ENCODE measurements at regions of chr20 and their contacts with region 1.

Region 1: GRCh38 chr20:47785854-47786764 is 828 bp upstream of the SULF2 start:
- DNase-seq: peak; percentile 80
- ATAC-seq: peak; percentile 74 to 88
- H3K4me3 ChIP-seq: peak overlapping the region; percentile 69
- H3K27ac ChIP-seq: peak overlapping the region; percentile 73 to 90
- H3K4me1 ChIP-seq: 0 out of 3 replicates have a peak, but pooled peaks cover 12% of the 10 kb centered on the region
- CTCF ChIP-seq: peak; percentile 82
- EP300 ChIP-seq: no peak
- POLR2A ChIP-seq: no peak
- RAD21 ChIP-seq: peak; percentile 89 to 95

Region 2: DNA sequence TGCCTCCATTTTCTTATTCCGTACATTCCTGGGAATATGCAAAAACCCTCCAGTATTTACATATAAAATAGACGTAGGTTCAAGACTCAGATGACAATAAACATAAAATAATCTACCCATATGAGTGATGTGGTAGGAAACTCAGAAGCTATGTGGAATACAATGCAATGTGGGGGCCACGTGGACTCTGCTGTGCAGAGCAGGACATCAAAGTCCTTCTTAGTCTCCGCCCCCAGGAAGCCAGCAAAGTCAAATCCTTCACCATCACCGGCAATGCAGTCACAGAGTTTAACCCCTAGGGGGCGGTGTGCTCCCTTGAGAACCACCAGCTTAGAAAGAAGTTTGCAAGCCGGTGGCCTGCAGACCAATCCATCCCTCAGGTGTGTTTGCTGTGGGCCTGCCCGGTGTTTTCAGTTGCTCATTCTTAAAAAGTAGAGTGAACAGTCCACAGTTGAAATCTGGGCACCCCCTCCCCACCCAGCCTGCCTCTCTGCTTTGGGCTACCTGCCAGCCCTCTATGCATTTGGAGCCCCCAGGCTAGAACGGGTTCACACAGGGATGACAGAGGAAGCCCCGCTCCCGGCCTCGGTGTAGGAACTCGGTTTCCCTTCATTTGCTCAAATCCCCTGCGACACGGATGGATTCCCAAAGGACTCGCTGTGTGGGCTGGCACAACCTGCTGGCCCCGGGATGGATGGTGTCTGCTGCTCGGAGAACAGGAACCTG is 60.7 kb before region 1 on chr20:
- CTCF ChIA-PET with region 1: interaction called, 28 read pairs
- POLR2A ChIA-PET with region 1: no interaction called
- DNase-seq: peak; percentile 85 to 88
- ATAC-seq: peak; percentile 81 to 92
- H3K4me3 ChIP-seq: no peak overlapping the region
- H3K27ac ChIP-seq: no peak overlapping the region
- H3K4me1 ChIP-seq: no peaks in the 10 kb centered on the region
- CTCF ChIP-seq: peak; percentile 81
- EP300 ChIP-seq: no peak
- POLR2A ChIP-seq: no peak
- RAD21 ChIP-seq: peak; percentile 81 to 90

Region 3: GRCh38 chr20:47805799-47806350 is 19.8 kb after region 1 on chr20:
- CTCF ChIA-PET with region 1: interaction called, 18 read pairs
- POLR2A ChIA-PET with region 1: no interaction called
- DNase-seq: no peak
- ATAC-seq: no peak
- H3K4me3 ChIP-seq: no peak overlapping the region
- H3K27ac ChIP-seq: no peak overlapping the region
- H3K4me1 ChIP-seq: peaks cover 6% of the 10 kb centered on the region; the same call in 2 of the 3 replicates
- CTCF ChIP-seq: no peak
- EP300 ChIP-seq: no peak
- POLR2A ChIP-seq: no peak
- RAD21 ChIP-seq: no peak

Region 4: GRCh38 chr20:48188657-48189551 is 402.8 kb after region 1 on chr20:
- CTCF ChIA-PET with region 1: interaction called, 11 read pairs
- POLR2A ChIA-PET with region 1: no interaction called
- DNase-seq: peak; percentile 25 to 28
- ATAC-seq: peak in 1 of 2 experiments; percentile 57; a peak in 2 of 6 replicates
- H3K4me3 ChIP-seq: no peak overlapping the region
- H3K27ac ChIP-seq: no peak overlapping the region
- H3K4me1 ChIP-seq: no peaks in the 10 kb centered on the region
- CTCF ChIP-seq: peak; percentile 42
- EP300 ChIP-seq: no peak
- POLR2A ChIP-seq: no peak
- RAD21 ChIP-seq: peak; percentile 52 to 58; a peak in 4 of 5 replicates

Region 5: GRCh38 chr20:48538420-48539203 is 752.5 kb after region 1 on chr20:
- CTCF ChIA-PET with region 1: interaction called, 10 read pairs
- POLR2A ChIA-PET with region 1: no interaction called
- DNase-seq: peak; percentile 51 to 55
- ATAC-seq: peak; percentile 80 to 84; a peak in 5 of 6 replicates
- H3K4me3 ChIP-seq: no peak overlapping the region
- H3K27ac ChIP-seq: peak overlapping the region; percentile 42 to 75
- H3K4me1 ChIP-seq: peaks cover 20% of the 10 kb centered on the region
- CTCF ChIP-seq: no peak
- EP300 ChIP-seq: no peak
- POLR2A ChIP-seq: no peak
- RAD21 ChIP-seq: no peak